Posterior cingulate gyrus (tissue), 11 donors: ENCODE measurements at regions of chr1 and their contacts with region 1.

Region 1: GRCh38 chr1:183804881-183805841 is at the start of gene RGL1:
- DNase-seq: peak; percentile 54 to 95 (median 70)

Region 2: GRCh38 chr1:183646776-183647175 is 158.4 kb before region 1 on chr1:
- intact Hi-C with region 1: loop called (anchors 10 kb)
- DNase-seq: no peak

Region 3: GRCh38 chr1:183871142-183871541 is 66.0 kb after region 1 on chr1:
- intact Hi-C with region 1: loop called (anchors 2 kb)
- DNase-seq: peak in 1 of 10 donors; percentile 23

Region 4: DNA sequence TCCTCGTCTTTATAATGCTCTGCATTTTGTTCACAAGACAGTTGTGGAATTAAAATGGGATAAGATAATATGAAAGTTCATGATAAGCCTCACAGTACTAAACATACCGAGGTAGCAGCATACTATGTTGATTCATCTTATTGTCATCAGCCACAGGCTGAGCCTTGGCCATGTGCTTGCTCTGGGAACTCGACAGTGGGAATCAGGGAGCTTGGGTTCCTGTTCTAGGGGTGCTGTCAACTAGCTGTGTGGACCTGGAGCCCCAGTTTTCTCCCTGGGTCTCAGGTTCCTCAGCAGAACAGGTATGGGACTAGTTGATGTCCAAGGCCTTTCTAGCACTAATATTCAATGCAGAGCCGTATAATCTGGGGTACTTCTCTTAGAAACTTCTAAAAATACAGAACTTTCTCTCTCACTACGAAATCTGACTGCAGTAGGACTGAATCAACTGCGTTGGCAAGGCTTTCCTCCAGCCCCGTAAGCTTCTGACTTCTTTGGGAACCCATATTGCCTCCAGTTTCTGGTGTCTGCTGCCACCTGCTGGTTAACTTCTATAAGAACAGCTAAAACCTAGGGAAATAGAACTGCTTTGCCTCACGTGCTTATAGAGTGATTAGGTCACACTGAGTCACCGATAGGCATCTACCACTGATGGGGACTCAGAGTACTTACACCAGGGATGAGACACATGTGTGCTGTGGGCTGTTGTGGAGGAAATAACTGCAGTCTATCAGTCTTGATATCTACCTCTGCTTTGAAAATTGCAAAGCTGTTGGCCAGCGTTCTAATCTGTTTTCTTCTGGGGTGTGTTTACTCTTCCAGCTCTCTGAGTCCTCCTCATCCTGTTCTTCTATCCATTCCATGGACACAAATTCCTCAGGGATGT is 110.7 kb after region 1 on chr1:
- intact Hi-C with region 1: loop called (anchors 5 kb)
- DNase-seq: peak in 8 of 10 donors; percentile 35 to 92 (median 75)

Region 5: GRCh38 chr1:184051485-184052193 is 246.5 kb after region 1 on chr1 and contains the start of gene TSEN15:
- intact Hi-C with region 1: loop called (anchors 10 kb)
- DNase-seq: peak; percentile 58 to 95 (median 76)